ENCODE measurements at regions of chr9 and their contacts with region 1.

Region 1: DNA sequence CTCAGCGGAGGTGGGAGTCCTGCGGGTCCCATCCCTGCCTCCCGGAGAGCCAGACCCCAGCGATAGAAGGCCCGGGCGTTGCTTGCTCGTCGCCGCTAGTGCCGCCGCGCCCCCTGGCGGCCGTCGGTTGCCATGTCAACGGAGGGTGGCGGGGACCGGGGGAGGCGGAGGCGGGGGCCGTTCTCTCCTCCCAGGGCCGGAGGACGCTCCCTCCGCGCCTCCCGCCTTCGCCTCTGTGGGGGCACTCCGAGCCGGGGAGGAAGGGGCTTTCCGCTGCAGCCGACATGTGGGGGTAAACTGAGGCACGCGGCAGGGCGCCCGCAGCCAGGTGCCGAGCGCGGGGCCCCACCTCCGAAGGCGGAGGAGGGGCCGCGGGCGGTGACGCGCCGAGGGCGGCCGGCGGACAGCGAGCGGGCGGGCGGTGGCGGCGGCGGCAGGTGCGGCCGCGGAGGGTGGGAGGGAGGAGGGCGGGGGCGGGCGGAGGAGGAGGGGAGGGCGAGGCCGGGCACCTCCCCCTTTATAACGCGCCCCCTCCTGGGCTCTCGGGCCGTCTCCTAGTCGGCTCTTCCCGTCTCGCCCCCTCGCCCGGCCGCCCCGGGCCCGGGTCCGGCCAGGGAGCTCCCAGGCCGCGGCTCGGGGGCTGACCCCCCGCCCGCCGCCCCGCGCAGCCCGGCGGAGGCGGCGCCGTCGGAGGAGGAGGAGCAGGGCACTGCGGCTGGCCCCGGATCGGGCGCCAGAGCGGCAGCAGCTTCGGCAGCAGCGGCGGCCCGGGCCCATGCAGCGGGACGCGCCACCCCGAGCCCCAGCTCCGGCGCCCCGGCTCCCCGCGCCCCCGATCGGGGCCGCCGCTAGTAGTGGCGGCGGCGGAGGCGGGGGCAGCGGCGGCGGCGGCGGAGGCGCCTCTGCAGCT is 556 bp upstream of the CDK9 start:
- DNase-seq: no peak
- ATAC-seq: peak; percentile 79
- H3K4me3 ChIP-seq: peak overlapping the region; percentile 45 to 88
- H3K27ac ChIP-seq: no peak overlapping the region
- H3K4me1 ChIP-seq: peaks cover 8% of the 10 kb centered on the region
- H3K27me3 ChIP-seq: no peaks in the 10 kb centered on the region
- CTCF ChIP-seq: peak; percentile 91

Region 2: GRCh38 chr9:127734747-127735529 is 50.3 kb before region 1 on chr9 and contains the start of gene TOR2A:
- CTCF ChIA-PET with region 1: interaction called, 3 read pairs
- POLR2A ChIA-PET with region 1: no interaction called
- in situ Hi-C with region 1: no loop called
- intact Hi-C with region 1: loop called (anchors 2 kb)
- DNase-seq: peak; percentile 70
- ATAC-seq: peak; percentile 98
- H3K4me3 ChIP-seq: peak within 1 kb of the TSS; percentile 63 to 65
- H3K27ac ChIP-seq: peak within 1 kb of the TSS; percentile 44
- H3K4me1 ChIP-seq: no peaks in the 10 kb centered on the region
- H3K27me3 ChIP-seq: no peaks in the 10 kb centered on the region
- CTCF ChIP-seq: peak; percentile 81
- total RNA-seq, gene TOR2A: 8.2 TPM

Region 3: DNA sequence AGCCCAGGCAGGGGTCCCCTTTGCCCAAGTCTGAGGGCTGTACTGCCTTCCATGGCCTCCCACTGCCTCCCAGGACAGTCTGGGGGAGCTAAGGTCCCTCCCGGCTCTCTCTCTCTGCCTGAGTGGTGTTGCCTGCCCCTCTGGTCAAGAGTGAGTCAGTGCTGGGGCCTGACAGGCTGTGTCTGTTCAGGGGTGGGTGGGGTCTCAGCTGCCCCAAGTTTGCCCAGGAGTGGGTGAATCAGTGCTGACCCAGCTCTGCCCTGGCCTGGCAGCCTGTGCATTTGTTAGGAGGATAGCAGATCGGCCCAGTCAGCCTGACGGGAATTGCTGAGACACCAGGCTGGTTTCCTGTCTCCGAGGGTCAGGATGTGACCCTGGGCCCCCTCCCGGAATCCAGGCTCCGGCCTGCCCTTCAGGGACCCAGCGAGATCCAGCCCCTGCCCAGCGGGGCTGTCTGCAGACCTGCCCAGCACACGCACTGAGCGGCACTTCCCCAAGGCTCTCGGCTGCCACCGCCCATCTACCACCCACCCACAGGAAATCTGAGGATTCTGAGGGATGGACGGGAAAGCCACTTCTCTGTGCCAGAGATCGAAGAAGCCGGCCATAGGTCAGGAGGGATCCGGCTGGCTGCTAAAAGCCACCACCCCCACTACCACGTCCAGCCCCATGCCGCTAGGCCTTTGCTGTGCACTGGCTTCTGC is 53.2 kb after region 1 on chr9:
- CTCF ChIA-PET with region 1: interaction called, 10 read pairs
- POLR2A ChIA-PET with region 1: no interaction called
- in situ Hi-C with region 1: no loop called
- intact Hi-C with region 1: no loop called
- DNase-seq: peak; percentile 8
- ATAC-seq: peak; percentile 64
- H3K4me3 ChIP-seq: no peak overlapping the region
- H3K27ac ChIP-seq: no peak overlapping the region
- H3K4me1 ChIP-seq: peaks cover 4% of the 10 kb centered on the region; the same call in 1 of the 2 replicates
- H3K27me3 ChIP-seq: no peaks in the 10 kb centered on the region
- CTCF ChIP-seq: no peak